Heart left ventricle (tissue), 16 donors: ENCODE measurements at regions of chr9 and their contacts with region 1.

Region 1: GRCh38 chr9:16417161-16417560 is 453.3 kb downstream of the BNC2 start:
- DNase-seq: no peak
- ATAC-seq: no peak
- H3K4me3 ChIP-seq: peak overlapping the region in 2 of 12 donors; percentile 11 to 14
- H3K27ac ChIP-seq: peak overlapping the region in 7 of 12 donors; percentile 5 to 54 (median 24)
- H3K4me1 ChIP-seq: peaks cover 0 to 12% (median 0%) of the 10 kb centered on the region in 12 donors
- H3K27me3 ChIP-seq: peaks cover 0 to 3% (median 0%) of the 10 kb centered on the region in 9 donors
- CTCF ChIP-seq: no peak
- POLR2A ChIP-seq: no peak

Region 2: GRCh38 chr9:16344343-16344742 is 72.8 kb before region 1 on chr9:
- intact Hi-C with region 1: loop called in 1 of 10 experiments (anchors 10 kb)
- DNase-seq: no peak
- ATAC-seq: peak in 2 of 4 donors; percentile 58 to 85
- H3K4me3 ChIP-seq: no peak overlapping the region
- H3K27ac ChIP-seq: peak overlapping the region in 2 of 12 donors; percentile 26 to 61
- H3K4me1 ChIP-seq: peaks cover 0 to 22% (median 8%) of the 10 kb centered on the region in 12 donors
- H3K27me3 ChIP-seq: no peaks in the 10 kb centered on the region
- CTCF ChIP-seq: no peak
- POLR2A ChIP-seq: no peak

Region 3: GRCh38 chr9:16794871-16795639 is 377.9 kb after region 1 on chr9:
- intact Hi-C with region 1: loop called in 1 of 10 experiments (anchors 10 kb)
- DNase-seq: peak in 4 of 5 donors; percentile 22 to 54 (median 40)
- ATAC-seq: peak; percentile 74 to 95 (median 91)
- H3K4me3 ChIP-seq: no peak overlapping the region
- H3K27ac ChIP-seq: peak overlapping the region in 10 of 12 donors; percentile 5 to 65 (median 34)
- H3K4me1 ChIP-seq: peaks cover 0 to 16% (median 2%) of the 10 kb centered on the region in 12 donors
- H3K27me3 ChIP-seq: no peaks in the 10 kb centered on the region
- CTCF ChIP-seq: no peak
- POLR2A ChIP-seq: no peak